ENCODE measurements at regions of chr20 and their contacts with region 1.

Region 1: DNA sequence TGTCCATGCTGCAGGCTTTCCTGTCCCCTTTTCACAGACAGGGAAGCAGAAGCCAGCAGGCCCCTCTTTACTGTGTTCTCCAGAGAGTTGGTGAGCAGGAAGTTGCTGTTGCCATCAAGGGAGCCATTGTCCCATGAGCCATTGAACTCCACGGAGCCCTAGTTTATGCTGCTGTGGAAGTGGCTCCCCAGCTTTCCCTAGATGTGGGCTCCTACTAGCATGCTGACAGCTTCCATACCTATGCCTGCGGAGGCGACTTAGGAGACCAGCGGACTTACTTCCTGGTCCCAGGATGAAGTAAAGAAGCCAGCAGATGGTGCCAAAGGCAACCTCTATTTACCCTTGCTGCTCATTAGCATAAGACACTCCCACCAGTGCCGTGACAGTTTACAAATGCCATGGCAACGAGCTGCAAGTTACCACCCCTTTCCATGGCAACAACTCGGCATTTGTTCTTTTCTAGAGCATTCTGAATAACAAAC is 30.8 kb upstream of the FKBP1A start:
- DNase-seq: peak; percentile 81
- ATAC-seq: peak; percentile 85
- H3K4me3 Mint-ChIP-seq: no peak overlapping the region
- H3K27ac Mint-ChIP-seq: no peak overlapping the region
- H3K4me1 Mint-ChIP-seq: peaks cover 35% of the 10 kb centered on the region
- H3K27me3 Mint-ChIP-seq: peaks cover 5% of the 10 kb centered on the region; the same call in 1 of the 2 replicates
- CTCF ChIP-seq: no peak

Region 2: DNA sequence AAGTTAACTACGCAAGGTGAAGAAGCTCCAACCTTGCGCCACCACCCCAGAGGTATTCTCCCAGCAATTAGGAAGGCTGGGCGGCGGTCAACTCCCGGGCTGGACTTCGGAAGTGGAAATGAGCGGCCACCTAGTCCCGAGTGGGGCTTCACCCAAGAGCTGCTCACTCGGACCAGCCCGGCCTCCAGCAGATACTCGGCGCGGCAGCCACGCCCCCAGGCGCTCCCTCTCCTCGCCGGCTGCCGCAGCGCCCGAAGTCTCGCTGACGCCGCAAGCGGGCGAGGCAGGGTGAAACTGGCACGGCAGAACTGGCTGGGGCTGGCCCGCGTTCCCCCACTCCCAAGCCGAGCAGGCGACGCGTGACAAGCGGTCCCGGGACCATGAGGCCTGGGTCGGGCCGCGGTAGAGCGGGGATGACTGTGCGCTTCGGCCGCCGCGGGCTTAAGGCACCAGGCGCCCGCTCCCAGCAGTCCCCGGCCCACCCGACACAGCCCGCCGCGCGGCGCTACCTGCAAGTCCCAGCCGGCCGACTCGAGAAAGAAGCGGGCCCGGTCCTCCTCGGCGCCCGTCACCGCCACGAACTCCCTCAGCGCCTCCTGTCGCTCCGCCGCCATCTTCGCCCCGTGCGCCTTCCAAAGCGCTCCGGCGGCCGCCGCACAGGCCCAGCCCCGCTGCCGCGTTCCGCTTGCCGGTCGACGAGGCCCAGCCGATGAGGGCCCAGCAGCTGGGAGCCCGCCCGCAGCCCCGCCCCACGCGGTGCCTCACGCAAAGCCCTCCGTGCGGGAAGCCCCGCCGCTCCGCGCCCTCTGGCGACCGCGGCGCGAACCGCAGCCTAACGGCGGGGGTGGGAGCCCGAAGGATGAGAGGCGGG is 42.8 kb after region 1 on chr20 and contains the start of gene NSFL1C:
- CTCF ChIA-PET with region 1: interaction called, 12 read pairs
- POLR2A ChIA-PET with region 1: interaction called, 4 read pairs
- DNase-seq: peak; percentile 98
- ATAC-seq: peak; percentile 91
- H3K4me3 Mint-ChIP-seq: peak within 1 kb of the TSS; percentile 85
- H3K27ac Mint-ChIP-seq: peak within 1 kb of the TSS; percentile 53; the same call in 1 of the 2 replicates
- H3K4me1 Mint-ChIP-seq: peaks cover 27% of the 10 kb centered on the region
- H3K27me3 Mint-ChIP-seq: peaks cover 4% of the 10 kb centered on the region
- CTCF ChIP-seq: peak; percentile 91
- total RNA-seq, gene NSFL1C: 76.7 to 85.5 TPM (median 83.2 TPM) in 3 replicates